Activated CD4-positive, alpha-beta T cell treated with anti-CD3 and anti-CD28 coated beads for 36 hours (primary cell): ENCODE measurements at regions of chr13 and their contacts with region 1.

Region 1: GRCh38 chr13:23871616-23872220 is 17.5 kb downstream of the MIPEP start:
- DNase-seq: no peak
- ATAC-seq: no peak
- H3K4me3 Mint-ChIP-seq: no peak overlapping the region
- H3K27ac Mint-ChIP-seq: no peak overlapping the region
- H3K4me1 Mint-ChIP-seq: no peaks in the 10 kb centered on the region
- H3K27me3 Mint-ChIP-seq: no peaks in the 10 kb centered on the region

Region 2: GRCh38 chr13:23510979-23511735 is 360.6 kb before region 1 on chr13:
- CTCF ChIA-PET with region 1: no interaction called
- POLR2A ChIA-PET with region 1: no interaction called
- intact Hi-C with region 1: loop called in 1 of 2 experiments (anchors 5 kb)
- DNase-seq: peak; percentile 6
- ATAC-seq: no peak
- H3K4me3 Mint-ChIP-seq: no peak overlapping the region
- H3K27ac Mint-ChIP-seq: no peak overlapping the region
- H3K4me1 Mint-ChIP-seq: no peaks in the 10 kb centered on the region
- H3K27me3 Mint-ChIP-seq: peaks cover 28% of the 10 kb centered on the region

Region 3: DNA sequence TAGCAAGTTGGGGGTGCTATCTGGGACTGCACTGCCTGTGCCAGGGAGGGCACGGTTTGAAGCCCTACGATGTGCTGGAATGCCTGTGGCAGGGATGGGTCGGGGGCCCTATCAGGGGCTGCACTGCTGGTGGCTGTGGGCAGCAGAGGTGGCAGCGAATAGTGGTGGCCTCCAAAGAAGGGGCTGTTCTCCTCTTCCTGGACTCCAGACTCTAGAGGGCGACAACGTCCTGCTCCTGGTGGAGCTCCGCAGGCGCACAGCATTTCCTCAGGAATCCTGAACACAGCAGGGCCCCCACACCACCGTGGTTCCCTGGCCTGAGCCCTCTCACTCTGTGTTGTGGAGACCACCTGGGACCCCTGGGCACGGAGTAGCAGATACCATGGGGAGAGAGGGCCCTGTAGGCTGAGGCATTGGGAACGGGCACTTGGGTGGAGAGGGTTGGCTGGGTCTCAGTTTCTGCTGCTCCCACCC is 155.9 kb before region 1 on chr13:
- CTCF ChIA-PET with region 1: no interaction called
- POLR2A ChIA-PET with region 1: no interaction called
- intact Hi-C with region 1: loop called (anchors 2 to 10 kb)
- DNase-seq: peak; percentile 32
- ATAC-seq: no peak
- H3K4me3 Mint-ChIP-seq: no peak overlapping the region
- H3K27ac Mint-ChIP-seq: no peak overlapping the region
- H3K4me1 Mint-ChIP-seq: peaks cover 20% of the 10 kb centered on the region
- H3K27me3 Mint-ChIP-seq: peaks cover 3% of the 10 kb centered on the region

Region 4: DNA sequence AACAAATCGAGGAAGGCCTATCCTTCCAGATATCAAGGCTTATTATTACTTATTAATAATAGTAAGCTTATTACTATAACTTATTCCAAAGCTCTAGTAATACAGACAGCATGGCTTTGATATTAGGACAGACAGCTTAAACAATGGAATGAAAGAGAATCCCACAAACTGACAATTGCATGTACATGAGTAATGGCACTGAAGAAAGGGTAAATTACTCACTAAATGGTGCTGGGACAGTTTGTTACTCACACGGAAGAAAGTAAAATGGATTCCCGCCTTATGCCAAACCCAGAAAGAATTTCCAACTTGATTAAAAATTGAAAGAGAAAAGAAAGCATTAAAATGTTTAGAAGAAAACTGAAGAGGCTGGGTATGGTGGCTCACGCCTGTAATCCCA is 42.9 kb before region 1 on chr13:
- CTCF ChIA-PET with region 1: no interaction called
- POLR2A ChIA-PET with region 1: no interaction called
- intact Hi-C with region 1: no loop called
- DNase-seq: no peak
- ATAC-seq: no peak
- H3K4me3 Mint-ChIP-seq: no peak overlapping the region
- H3K27ac Mint-ChIP-seq: no peak overlapping the region
- H3K4me1 Mint-ChIP-seq: no peaks in the 10 kb centered on the region
- H3K27me3 Mint-ChIP-seq: no peaks in the 10 kb centered on the region

Region 5: GRCh38 chr13:24042710-24043440 is 171.2 kb after region 1 on chr13:
- CTCF ChIA-PET with region 1: no interaction called
- POLR2A ChIA-PET with region 1: no interaction called
- intact Hi-C with region 1: no loop called
- DNase-seq: no peak
- ATAC-seq: no peak
- H3K4me3 Mint-ChIP-seq: no peak overlapping the region
- H3K27ac Mint-ChIP-seq: no peak overlapping the region
- H3K4me1 Mint-ChIP-seq: peaks cover 6% of the 10 kb centered on the region
- H3K27me3 Mint-ChIP-seq: peaks cover 4% of the 10 kb centered on the region